Dendritic cell treated with granulocyte-macrophage colony-stimulating factor and Interleukin-4, amounts not matched to agents 40 ng/mL and 50 ng/mL, for 4 days (primary cell): ENCODE measurements at regions of chr10 and their contacts with region 1.

Region 1: GRCh38 chr10:53033396-53033795 is 260.8 kb upstream of the MBL2 start:
- H3K4me3 Mint-ChIP-seq: no peak overlapping the region
- H3K27ac Mint-ChIP-seq: no peak overlapping the region
- H3K4me1 Mint-ChIP-seq: peaks cover 11% of the 10 kb centered on the region
- H3K27me3 Mint-ChIP-seq: no peaks in the 10 kb centered on the region

Region 2: GRCh38 chr10:52895059-52895458 is 138.3 kb before region 1 on chr10:
- intact Hi-C with region 1: no loop called
- H3K4me3 Mint-ChIP-seq: no peak overlapping the region
- H3K27ac Mint-ChIP-seq: no peak overlapping the region
- H3K4me1 Mint-ChIP-seq: no peaks in the 10 kb centered on the region
- H3K27me3 Mint-ChIP-seq: no peaks in the 10 kb centered on the region

Region 3: DNA sequence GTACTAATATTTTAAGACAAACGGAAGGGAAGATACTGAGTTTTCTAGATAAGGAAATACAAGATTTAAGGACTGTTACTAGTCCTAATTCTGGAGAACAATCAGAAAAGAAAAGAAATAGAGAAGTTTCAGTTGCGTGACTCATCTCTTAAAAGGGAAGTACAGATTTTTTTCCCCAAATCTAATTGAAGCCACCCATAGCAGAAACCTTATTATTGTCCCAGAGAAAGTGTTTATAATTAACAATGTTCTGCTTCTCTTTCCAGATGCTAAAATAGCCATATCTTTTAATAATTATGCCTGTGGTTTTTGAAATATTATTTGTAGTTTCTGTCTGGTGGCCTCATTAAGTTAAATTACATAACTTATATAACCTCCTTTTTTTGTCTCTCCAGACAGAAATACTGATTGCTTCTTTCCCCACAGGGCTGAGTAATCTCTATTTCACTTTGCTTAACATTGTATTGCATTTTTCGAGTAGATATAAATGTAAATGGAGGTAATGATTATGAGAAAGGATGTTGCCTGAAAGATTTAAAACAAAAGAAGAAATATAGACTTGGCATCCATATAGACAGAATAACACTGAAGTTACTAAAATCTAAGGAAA is 20.1 kb before region 1 on chr10:
- intact Hi-C with region 1: loop called (anchors 2 kb)
- H3K4me3 Mint-ChIP-seq: no peak overlapping the region
- H3K27ac Mint-ChIP-seq: peak overlapping the region; percentile 65
- H3K4me1 Mint-ChIP-seq: peaks cover 27% of the 10 kb centered on the region
- H3K27me3 Mint-ChIP-seq: no peaks in the 10 kb centered on the region

Region 4: GRCh38 chr10:53122281-53122680 is 88.9 kb after region 1 on chr10:
- intact Hi-C with region 1: no loop called
- H3K4me3 Mint-ChIP-seq: no peak overlapping the region
- H3K27ac Mint-ChIP-seq: peak overlapping the region; percentile 22
- H3K4me1 Mint-ChIP-seq: peaks cover 20% of the 10 kb centered on the region
- H3K27me3 Mint-ChIP-seq: no peaks in the 10 kb centered on the region